Tibial artery (tissue), 4 donors: ENCODE measurements at regions of chr22 and their contacts with region 1.

Region 1: DNA sequence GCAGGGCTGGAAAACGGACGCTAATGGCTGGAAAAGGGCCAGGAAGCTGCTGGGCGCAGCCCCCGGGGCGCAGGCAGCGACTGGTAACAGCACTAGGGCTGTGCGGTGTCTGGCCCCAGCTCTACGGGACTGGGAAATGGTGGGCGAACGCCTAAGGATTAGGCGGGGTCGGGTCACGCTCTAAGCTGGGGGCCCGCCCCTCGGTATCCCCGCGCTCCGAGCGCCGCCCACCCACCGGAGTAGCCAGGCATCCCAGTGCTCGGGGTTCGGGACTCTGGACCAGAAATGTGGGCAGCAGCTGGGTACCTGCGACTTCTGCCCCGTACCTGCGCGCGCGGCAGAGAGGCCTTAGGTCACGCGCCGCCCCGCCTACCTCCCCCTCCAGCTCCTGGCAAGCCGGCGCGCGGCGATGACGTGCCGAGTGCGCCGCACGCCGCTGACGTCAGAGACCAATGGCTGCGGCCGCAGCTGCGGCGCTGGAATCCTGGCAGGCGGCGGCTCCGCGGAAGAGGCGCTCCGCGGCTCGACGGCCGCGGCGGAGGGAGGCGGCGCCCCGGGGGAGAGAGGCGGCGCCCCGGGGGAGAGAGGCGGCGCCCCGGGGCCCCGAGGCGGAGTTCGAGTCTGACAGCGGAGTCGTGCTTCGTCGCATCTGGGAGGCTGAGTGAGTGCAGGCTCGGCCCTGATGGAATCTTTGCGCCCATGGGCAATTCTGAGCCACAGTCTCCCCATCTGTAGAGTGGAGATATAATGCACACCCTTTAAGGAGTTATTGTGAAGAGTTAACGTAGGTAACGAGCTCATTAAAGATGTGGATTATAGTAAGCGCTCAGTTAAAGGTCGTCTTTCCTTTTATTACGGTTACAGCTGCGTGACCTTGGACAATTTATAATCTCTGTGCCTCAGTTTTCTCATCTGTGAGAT is at the starts of genes HPS4 and SRRD:
- DNase-seq: peak; percentile 85 to 93
- H3K4me3 ChIP-seq: peak within 1 kb of the TSS; percentile 64 to 94
- H3K27ac ChIP-seq: peak within 1 kb of the TSS; percentile 90 to 97
- H3K4me1 ChIP-seq: peaks cover 0 to 59% (median 39%) of the 10 kb centered on the region in 4 donors
- H3K27me3 ChIP-seq: no peaks in the 10 kb centered on the region
- CTCF ChIP-seq: no peak

Region 2: GRCh38 chr22:25880524-25880923 is 603.2 kb before region 1 on chr22:
- intact Hi-C with region 1: no loop called
- DNase-seq: no peak
- H3K4me3 ChIP-seq: no peak overlapping the region
- H3K27ac ChIP-seq: no peak overlapping the region
- H3K4me1 ChIP-seq: no peaks in the 10 kb centered on the region
- H3K27me3 ChIP-seq: no peaks in the 10 kb centered on the region
- CTCF ChIP-seq: no peak

Region 3: DNA sequence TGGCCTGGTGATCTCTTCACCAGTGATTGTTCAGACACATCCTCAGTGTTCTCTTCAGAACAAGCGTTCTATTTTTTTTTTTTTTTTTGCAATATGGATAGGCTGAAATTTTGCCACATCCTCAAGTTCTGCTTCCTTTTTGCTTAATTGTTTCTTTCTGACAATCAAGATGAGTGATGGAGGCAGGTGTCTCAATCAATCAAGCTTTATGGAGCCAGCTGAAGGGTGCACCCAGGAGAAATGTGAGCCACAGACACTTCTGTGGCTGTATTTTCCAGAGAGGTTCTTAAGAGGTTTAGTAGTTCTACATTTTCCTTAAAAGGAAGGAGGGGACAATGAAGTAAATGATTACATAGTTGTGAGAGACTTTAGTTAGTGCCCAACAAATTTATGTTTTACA is 98.5 kb before region 1 on chr22:
- intact Hi-C with region 1: no loop called
- DNase-seq: no peak
- H3K4me3 ChIP-seq: no peak overlapping the region
- H3K27ac ChIP-seq: no peak overlapping the region
- H3K4me1 ChIP-seq: no peaks in the 10 kb centered on the region
- H3K27me3 ChIP-seq: peaks cover 0 to 16% of the 10 kb centered on the region in 2 donors
- CTCF ChIP-seq: no peak

Region 4: DNA sequence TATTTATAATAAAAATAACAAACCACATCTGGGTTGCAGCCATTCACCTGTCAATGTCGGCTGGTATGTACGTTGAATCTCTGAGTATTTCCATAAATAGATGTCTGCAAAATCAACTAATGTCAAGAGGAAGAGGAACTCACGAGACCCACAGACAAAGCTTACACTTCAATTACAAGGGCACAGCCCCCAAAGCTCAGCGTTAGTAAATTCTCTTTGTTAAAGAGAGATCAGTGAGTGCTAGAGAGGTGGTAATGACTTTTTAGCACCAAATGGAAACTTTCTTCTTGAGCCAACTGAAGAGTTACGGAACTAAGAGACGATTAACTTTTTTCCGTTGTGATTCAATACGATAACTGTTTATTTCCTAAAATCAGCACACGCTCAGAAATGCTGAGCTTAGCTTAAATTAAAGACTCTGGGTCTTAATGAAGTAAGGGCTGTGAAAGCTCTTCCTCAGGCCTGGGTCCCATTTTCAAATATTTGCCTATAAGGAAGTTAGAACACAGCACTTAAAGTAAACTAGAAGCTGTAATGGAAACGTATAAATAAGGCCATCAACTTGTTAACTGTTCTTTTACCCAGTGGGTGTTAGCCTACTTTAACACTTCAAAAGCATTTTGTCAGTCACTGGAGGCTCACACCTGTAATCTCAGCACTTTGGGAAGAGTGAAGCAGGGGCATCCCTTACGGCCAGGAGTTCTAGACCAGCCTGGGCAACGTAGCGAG is 51.3 kb after region 1 on chr22:
- intact Hi-C with region 1: no loop called
- DNase-seq: no peak
- H3K4me3 ChIP-seq: no peak overlapping the region
- H3K27ac ChIP-seq: no peak overlapping the region
- H3K4me1 ChIP-seq: no peaks in the 10 kb centered on the region
- H3K27me3 ChIP-seq: no peaks in the 10 kb centered on the region
- CTCF ChIP-seq: no peak

Region 5: DNA sequence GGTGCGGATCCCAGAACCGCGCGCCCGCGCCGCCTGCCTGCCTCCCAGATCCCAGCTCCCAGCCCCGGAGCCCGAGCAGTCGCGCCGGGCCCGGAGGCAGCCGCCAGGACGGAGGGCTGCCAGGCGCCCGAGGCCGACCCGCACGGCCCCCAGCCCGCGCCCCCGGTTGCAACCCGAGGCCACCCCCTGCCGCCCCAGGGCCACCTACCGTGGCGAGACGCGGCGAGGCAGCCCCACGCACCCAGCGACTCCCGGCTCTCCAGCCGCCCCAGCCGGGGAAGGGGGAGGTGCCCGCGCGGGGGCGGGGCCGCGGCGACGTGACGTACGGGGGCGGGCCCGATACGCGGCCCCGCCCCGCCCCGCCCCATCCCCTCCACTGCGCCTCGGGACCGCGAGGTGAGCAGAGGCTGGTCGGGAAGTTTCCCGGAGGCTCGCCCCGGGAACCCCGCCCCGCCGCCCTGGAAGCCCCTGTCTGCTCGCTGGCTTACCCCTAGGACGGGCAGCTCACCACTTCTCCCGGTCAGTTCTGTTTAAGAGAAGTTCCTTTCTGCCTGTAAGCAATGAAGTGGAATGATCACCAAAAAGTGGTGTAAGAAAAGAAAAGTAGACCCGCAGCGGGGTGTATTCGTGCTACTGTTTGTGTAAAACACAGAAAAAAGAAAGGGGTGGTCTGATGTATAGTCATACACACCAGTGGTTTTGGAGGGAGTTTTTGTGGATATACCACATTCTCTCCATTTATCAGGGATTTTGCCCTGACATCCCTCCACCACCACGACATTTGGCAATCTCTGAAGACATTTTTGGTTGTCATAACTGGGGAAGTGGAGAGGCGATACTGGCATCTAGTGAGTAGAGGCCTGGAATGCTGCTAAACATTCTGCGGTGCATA is 106.4 kb after region 1 on chr22 and contains the start of gene TPST2:
- intact Hi-C with region 1: loop called (anchors 10 kb)
- DNase-seq: peak; percentile 54 to 87
- H3K4me3 ChIP-seq: peak within 1 kb of the TSS; percentile 72 to 94
- H3K27ac ChIP-seq: peak within 1 kb of the TSS; percentile 73 to 82
- H3K4me1 ChIP-seq: peaks cover 0 to 28% (median 16%) of the 10 kb centered on the region in 4 donors
- H3K27me3 ChIP-seq: no peaks in the 10 kb centered on the region
- CTCF ChIP-seq: no peak